Heart left ventricle (tissue), 16 donors: ENCODE measurements at regions of chr18 and their contacts with region 1.

Region 1: GRCh38 chr18:7370802-7371201 is 139.9 kb downstream of the LRRC30 start:
- DNase-seq: peak; percentile 81 to 90 (median 87)
- ATAC-seq: peak; percentile 83 to 93 (median 92)
- H3K4me3 ChIP-seq: peak overlapping the region in 2 of 12 donors; percentile 7 to 22
- H3K27ac ChIP-seq: peak overlapping the region in 11 of 12 donors; percentile 76 to 96 (median 88)
- H3K4me1 ChIP-seq: peaks cover 0 to 74% (median 37%) of the 10 kb centered on the region in 12 donors
- H3K27me3 ChIP-seq: no peaks in the 10 kb centered on the region
- CTCF ChIP-seq: no peak
- POLR2A ChIP-seq: no peak

Region 2: GRCh38 chr18:7272311-7273049 is 98.3 kb before region 1 on chr18:
- intact Hi-C with region 1: loop called in 7 of 10 experiments (anchors 2 to 10 kb)
- DNase-seq: peak; percentile 71 to 76 (median 74)
- ATAC-seq: peak; percentile 78 to 88 (median 84)
- H3K4me3 ChIP-seq: peak overlapping the region in 9 of 12 donors; percentile 25 to 45 (median 32)
- H3K27ac ChIP-seq: peak overlapping the region; percentile 64 to 84 (median 78)
- H3K4me1 ChIP-seq: peaks cover 3 to 24% (median 19%) of the 10 kb centered on the region in 12 donors
- H3K27me3 ChIP-seq: no peaks in the 10 kb centered on the region
- CTCF ChIP-seq: peak; percentile 21 to 75 (median 58)
- POLR2A ChIP-seq: no peak

Region 3: GRCh38 chr18:7325126-7325430 is 45.7 kb before region 1 on chr18:
- intact Hi-C with region 1: loop called in 2 of 10 experiments (anchors 2 kb)
- DNase-seq: no peak
- ATAC-seq: peak in 2 of 4 donors; percentile 26 to 38
- H3K4me3 ChIP-seq: no peak overlapping the region
- H3K27ac ChIP-seq: peak overlapping the region in 9 of 12 donors; percentile 6 to 71 (median 57)
- H3K4me1 ChIP-seq: peaks cover 0 to 28% (median 8%) of the 10 kb centered on the region in 12 donors
- H3K27me3 ChIP-seq: no peaks in the 10 kb centered on the region
- CTCF ChIP-seq: no peak
- POLR2A ChIP-seq: no peak

Region 4: GRCh38 chr18:7436166-7436565 is 65.4 kb after region 1 on chr18:
- intact Hi-C with region 1: loop called in 1 of 10 experiments (anchors 10 kb)
- DNase-seq: no peak
- ATAC-seq: no peak
- H3K4me3 ChIP-seq: no peak overlapping the region
- H3K27ac ChIP-seq: no peak overlapping the region
- H3K4me1 ChIP-seq: no peaks in the 10 kb centered on the region
- H3K27me3 ChIP-seq: no peaks in the 10 kb centered on the region
- CTCF ChIP-seq: no peak
- POLR2A ChIP-seq: no peak

Region 5: GRCh38 chr18:7559709-7560319 is 189.0 kb after region 1 on chr18:
- intact Hi-C with region 1: loop called in 4 of 10 experiments (anchors 2 to 5 kb)
- DNase-seq: peak in 4 of 5 donors; percentile 21 to 39 (median 30)
- ATAC-seq: peak in 3 of 4 donors; percentile 36 to 68 (median 51)
- H3K4me3 ChIP-seq: no peak overlapping the region
- H3K27ac ChIP-seq: peak overlapping the region in 9 of 12 donors; percentile 25 to 65 (median 40)
- H3K4me1 ChIP-seq: peaks cover 0 to 54% (median 18%) of the 10 kb centered on the region in 12 donors
- H3K27me3 ChIP-seq: no peaks in the 10 kb centered on the region
- CTCF ChIP-seq: no peak
- POLR2A ChIP-seq: no peak